Prostate gland (tissue), 2 donors: ENCODE measurements at regions of chr1 and their contacts with region 1.

Region 1: GRCh38 chr1:178870944-178871343 is at the start of gene ANGPTL1:
- DNase-seq: no peak
- H3K4me3 ChIP-seq: no peak within 1 kb of the TSS
- H3K27ac ChIP-seq: no peak within 1 kb of the TSS
- H3K4me1 ChIP-seq: no peaks in the 10 kb centered on the region
- H3K27me3 ChIP-seq: no peaks in the 10 kb centered on the region
- CTCF ChIP-seq: no peak
- POLR2A ChIP-seq: no peak
- total RNA-seq, gene ANGPTL1: 11.3 to 18.9 TPM

Region 2: GRCh38 chr1:178513278-178514022 is 357.5 kb before region 1 on chr1:
- intact Hi-C with region 1: no loop called
- DNase-seq: no peak
- H3K4me3 ChIP-seq: no peak overlapping the region
- H3K27ac ChIP-seq: no peak overlapping the region
- H3K4me1 ChIP-seq: no peaks in the 10 kb centered on the region
- H3K27me3 ChIP-seq: no peaks in the 10 kb centered on the region
- CTCF ChIP-seq: no peak
- POLR2A ChIP-seq: no peak

Region 3: DNA sequence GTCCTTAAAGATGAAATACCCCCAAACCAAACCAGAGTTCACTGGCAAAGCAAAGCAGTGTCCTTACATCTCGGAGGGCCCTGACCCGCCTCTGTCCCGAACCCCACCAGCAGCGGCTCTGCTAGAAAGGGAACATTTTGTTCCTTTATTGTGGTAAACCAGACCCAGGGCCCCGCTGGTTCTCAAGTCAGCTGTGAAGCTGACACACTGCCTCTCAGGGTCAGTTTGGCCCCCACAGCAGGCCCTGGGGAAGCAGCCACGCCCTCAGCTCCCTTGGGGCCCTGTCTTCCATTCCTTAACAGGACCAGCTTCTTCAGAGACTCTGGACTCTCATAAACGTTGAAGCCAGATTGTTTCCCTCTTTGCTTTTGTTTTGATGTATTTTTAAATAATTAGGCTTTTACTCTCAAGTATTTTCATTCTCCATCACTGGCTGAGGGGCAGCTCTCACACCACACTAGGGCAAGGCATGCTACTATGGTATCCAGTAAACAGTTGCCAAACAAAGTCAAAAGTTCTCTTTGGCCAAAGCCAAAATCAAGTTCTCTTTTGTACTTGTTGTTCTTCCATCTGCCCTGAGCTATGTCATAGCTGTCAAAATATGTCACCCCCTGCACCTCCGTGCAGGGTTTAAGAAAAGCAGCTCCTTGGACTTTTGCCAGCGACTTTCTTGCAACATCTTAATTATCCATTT is 61.1 kb after region 1 on chr1:
- intact Hi-C with region 1: loop called (anchors 10 kb)
- DNase-seq: no peak
- H3K4me3 ChIP-seq: no peak overlapping the region
- H3K27ac ChIP-seq: peak overlapping the region; percentile 46 to 51
- H3K4me1 ChIP-seq: no peaks in the 10 kb centered on the region
- H3K27me3 ChIP-seq: no peaks in the 10 kb centered on the region
- CTCF ChIP-seq: no peak
- POLR2A ChIP-seq: no peak

Region 4: DNA sequence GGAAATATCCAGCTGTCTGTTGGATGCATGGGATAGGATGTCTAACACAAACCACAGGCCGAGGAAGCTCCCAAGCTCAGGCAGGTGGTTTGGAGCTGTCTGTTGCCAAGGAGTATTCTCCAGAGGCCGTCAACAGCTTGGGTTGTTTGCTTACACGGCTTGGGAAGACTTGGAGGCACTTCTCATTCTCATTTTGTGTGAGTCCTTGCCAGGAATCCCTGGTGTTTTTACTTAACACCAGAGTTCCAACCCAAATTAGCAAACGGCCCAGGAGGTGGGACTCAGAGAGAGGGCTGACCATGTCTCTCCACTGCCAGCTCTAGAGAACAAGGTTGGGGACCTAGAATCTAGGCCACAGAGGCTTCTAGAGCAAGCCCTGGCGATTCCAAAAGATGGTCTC is 82.1 kb after region 1 on chr1:
- intact Hi-C with region 1: loop called (anchors 5 kb)
- DNase-seq: no peak
- H3K4me3 ChIP-seq: no peak overlapping the region
- H3K27ac ChIP-seq: peak overlapping the region; percentile 7 to 39
- H3K4me1 ChIP-seq: no peaks in the 10 kb centered on the region
- H3K27me3 ChIP-seq: no peaks in the 10 kb centered on the region
- CTCF ChIP-seq: no peak
- POLR2A ChIP-seq: no peak

Region 5: DNA sequence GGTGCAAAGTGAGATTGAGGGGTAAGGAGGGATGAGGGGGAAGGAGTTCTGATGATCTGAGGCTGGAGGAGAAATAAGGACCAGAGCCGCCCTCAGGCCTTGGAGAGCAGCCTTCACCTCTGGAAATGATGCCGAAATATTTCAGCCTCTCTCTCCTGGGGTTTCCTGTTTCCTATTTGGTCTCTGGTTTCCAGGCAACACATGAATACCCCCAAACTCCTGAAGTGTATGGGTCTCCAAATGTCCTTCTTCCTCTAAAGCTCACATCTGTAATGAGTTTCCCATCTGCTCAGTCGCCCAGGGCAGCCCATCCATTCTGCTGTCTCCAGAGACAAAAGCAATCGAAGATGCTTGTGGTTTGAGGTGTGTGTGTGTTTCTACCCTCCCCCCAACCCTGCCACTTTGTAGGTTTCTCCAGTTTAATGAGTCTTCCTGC is 102.7 kb after region 1 on chr1:
- intact Hi-C with region 1: no loop called
- DNase-seq: no peak
- H3K4me3 ChIP-seq: no peak overlapping the region
- H3K27ac ChIP-seq: no peak overlapping the region
- H3K4me1 ChIP-seq: no peaks in the 10 kb centered on the region
- H3K27me3 ChIP-seq: no peaks in the 10 kb centered on the region
- CTCF ChIP-seq: no peak
- POLR2A ChIP-seq: no peak